HEK293 (cell line): ENCODE measurements at regions of chr5 and their contacts with region 1.

Region 1: DNA sequence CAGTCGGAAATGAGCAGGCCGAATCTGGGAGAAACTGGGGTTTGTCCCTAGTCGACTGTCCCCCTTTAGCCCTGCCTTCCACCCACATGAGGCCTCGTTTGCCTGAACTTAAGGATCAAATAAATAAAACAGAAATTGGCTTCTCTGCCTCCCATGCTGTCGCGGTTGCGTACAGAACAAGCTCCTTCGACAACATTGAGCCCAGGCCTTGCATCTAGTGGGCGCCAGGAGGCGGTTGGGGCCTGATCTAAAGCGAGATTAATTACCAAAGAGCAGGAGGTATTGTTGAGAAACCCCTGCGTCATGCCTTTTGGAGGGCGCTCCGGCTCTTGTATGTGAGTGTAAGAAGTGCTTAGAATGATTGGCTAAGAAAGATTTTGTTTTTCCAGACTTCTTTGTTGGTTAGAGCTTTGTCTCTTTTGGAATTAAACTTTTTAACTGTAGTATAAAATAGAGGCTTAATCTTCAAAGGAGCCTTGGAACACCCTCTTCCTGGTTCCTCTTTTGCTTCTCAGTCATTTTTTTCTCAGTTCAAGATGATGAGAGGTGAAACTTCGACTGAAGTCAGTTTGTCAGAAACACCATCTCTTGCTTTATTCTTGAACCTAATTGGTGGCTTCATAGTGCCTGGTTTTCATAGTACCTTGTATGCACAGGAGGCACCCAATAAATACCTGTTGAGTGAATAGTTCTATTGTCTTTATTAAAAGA is 827 bp downstream of the ATP6V0E1 start:
- H3K4me3 ChIP-seq: peak overlapping the region; percentile 87
- H3K27ac ChIP-seq: peak overlapping the region; percentile 67
- H3K4me1 ChIP-seq: no peaks in the 10 kb centered on the region; the same call in 1 of the 2 replicates
- CTCF ChIP-seq: peak; percentile 62; the same call in 1 of the 2 replicates

Region 2: DNA sequence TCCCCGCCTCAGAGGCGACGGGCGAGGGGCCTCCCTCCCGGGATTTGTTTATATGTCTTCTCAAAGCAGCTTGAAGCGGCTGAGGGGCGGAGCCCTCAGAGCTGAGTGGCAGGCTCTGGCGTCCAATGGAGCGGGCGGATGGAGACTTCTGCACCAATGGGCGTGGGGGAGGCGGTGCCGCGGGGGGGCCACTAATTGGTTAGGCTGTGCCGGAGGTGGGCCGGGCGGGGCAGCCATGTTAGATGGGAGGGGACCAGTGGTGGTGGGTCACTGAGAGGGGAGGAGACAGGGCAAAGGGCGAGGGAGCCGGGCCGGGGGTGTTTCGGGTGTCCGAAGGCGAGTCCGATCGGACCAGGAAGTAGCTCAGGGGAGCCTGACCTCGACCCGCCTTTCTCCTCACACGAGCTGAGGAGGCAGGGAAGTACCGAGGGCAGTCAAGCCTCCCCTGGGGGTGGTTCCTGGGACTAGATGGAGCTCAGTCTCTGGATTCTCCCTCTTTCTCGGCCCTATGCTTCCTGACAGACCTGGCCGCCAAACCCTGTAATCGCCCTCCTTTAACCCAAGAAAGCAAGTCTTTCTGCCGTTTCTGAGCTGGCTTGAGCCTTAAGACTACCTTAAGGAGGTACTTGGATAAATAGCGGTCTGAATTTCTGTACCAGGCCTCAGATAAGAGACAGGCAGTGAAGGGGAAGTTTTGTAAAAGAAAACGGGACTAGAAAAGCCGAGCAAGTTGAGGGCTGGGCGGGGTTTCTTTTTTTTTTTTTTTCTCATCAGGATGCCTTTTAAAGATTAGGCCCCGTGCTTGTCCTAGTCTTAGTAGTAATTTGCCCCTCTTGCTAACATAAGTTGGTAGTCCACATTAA is 72.9 kb after region 1 on chr5:
- CTCF ChIA-PET with region 1: interaction called, 6 read pairs
- POLR2A ChIA-PET with region 1: interaction called, 16 read pairs
- H3K4me3 ChIP-seq: peak overlapping the region; percentile 99
- H3K27ac ChIP-seq: peak overlapping the region; percentile 61
- H3K4me1 ChIP-seq: peaks cover 4% of the 10 kb centered on the region; the same call in 1 of the 2 replicates
- CTCF ChIP-seq: peak; percentile 35; the same call in 1 of the 2 replicates